Activated CD8-positive, alpha-beta T cell treated with anti-CD3 and anti-CD28 coated beads for 36 hours (primary cell): ENCODE measurements at regions of chr1 and their contacts with region 1.

Region 1: DNA sequence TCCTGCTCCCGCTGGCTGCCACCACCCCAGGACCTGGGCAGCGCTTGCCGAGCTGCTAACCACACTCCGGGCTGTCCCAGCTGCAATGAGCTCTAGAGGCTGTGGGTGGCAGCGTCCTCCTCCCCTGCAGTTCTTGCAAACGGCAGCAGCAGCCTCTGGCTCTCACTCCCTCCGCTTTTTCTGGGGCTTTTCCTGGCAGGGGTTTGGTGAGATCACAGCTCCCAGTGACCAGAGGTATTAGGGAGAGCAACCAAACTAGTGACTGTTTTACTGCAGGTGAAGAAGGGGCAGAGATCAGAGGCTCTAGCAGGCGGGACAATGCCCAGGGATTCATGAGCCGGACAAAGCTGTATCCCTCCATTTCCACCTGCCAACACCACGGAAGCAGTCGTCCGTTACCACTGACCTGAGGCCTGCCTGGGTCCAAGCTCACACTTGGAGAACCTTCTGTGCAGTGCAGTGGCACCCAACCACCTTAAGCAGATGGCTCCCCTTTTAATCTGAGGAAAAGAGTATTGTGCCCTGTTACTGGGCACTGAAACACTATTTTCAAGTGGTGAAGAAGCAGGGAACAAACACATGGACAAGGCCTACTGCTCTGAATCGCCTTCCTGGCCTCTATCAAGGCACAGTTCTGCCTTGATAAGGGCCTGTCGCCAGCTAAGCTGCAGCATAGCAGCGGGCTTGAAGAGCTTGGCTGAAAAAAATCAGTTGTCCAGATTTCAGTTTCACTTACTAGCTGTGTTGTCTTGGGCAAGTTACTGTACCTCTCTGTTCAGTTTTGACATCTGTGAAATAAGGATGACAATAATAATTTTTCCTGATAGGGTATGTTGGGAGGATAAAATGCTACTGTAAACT is at the start of gene F5:
- DNase-seq: peak; percentile 90
- ATAC-seq: peak; percentile 90
- H3K4me3 Mint-ChIP-seq: peak within 1 kb of the TSS; percentile 91
- H3K27ac Mint-ChIP-seq: peak within 1 kb of the TSS; percentile 91
- H3K4me1 Mint-ChIP-seq: peaks cover 71% of the 10 kb centered on the region
- H3K27me3 Mint-ChIP-seq: no peaks in the 10 kb centered on the region
- CTCF ChIP-seq: peak; percentile 66
- total RNA-seq, gene F5: 20.7 to 23.3 TPM

Region 2: GRCh38 chr1:169546087-169546995 is 40.3 kb before region 1 on chr1:
- CTCF ChIA-PET with region 1: interaction called, 11 read pairs
- POLR2A ChIA-PET with region 1: no interaction called
- intact Hi-C with region 1: no loop called
- DNase-seq: peak; percentile 57
- ATAC-seq: peak; percentile 66
- H3K4me3 Mint-ChIP-seq: no peak overlapping the region
- H3K27ac Mint-ChIP-seq: no peak overlapping the region
- H3K4me1 Mint-ChIP-seq: peaks cover 2% of the 10 kb centered on the region
- H3K27me3 Mint-ChIP-seq: no peaks in the 10 kb centered on the region
- CTCF ChIP-seq: peak; percentile 63

Region 3: GRCh38 chr1:169694304-169695075 is 107.9 kb after region 1 on chr1:
- CTCF ChIA-PET with region 1: interaction called, 17 read pairs
- POLR2A ChIA-PET with region 1: interaction called, 8 read pairs
- intact Hi-C with region 1: loop called (anchors 5 kb)
- DNase-seq: peak; percentile 58
- ATAC-seq: peak; percentile 39
- H3K4me3 Mint-ChIP-seq: peak overlapping the region; percentile 2
- H3K27ac Mint-ChIP-seq: peak overlapping the region; percentile 88
- H3K4me1 Mint-ChIP-seq: peaks cover 91% of the 10 kb centered on the region
- H3K27me3 Mint-ChIP-seq: no peaks in the 10 kb centered on the region
- CTCF ChIP-seq: peak; percentile 55

Region 4: DNA sequence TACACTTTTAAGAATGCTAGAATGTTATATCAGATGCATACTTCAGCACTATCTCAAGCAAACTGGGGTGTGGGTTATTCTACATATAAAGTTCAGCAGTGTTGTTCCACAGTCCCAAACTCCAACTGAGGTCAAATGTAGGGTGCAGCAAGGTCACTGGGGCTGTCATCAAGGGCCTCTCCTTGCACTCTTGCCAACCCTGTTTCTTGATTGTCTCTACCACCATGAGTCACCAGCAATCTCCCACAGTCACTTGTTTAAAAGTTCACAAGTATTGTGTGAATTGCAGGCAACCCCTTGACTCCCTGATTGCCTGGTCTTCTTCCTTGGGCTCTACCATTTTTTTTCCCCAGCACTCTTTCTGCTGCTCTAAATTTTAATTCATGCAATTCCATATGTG is 197.5 kb after region 1 on chr1:
- CTCF ChIA-PET with region 1: no interaction called
- POLR2A ChIA-PET with region 1: no interaction called
- intact Hi-C with region 1: no loop called
- DNase-seq: no peak
- ATAC-seq: peak; percentile 45
- H3K4me3 Mint-ChIP-seq: no peak overlapping the region
- H3K27ac Mint-ChIP-seq: no peak overlapping the region
- H3K4me1 Mint-ChIP-seq: no peaks in the 10 kb centered on the region
- H3K27me3 Mint-ChIP-seq: peaks cover 26% of the 10 kb centered on the region
- CTCF ChIP-seq: no peak

Region 5: DNA sequence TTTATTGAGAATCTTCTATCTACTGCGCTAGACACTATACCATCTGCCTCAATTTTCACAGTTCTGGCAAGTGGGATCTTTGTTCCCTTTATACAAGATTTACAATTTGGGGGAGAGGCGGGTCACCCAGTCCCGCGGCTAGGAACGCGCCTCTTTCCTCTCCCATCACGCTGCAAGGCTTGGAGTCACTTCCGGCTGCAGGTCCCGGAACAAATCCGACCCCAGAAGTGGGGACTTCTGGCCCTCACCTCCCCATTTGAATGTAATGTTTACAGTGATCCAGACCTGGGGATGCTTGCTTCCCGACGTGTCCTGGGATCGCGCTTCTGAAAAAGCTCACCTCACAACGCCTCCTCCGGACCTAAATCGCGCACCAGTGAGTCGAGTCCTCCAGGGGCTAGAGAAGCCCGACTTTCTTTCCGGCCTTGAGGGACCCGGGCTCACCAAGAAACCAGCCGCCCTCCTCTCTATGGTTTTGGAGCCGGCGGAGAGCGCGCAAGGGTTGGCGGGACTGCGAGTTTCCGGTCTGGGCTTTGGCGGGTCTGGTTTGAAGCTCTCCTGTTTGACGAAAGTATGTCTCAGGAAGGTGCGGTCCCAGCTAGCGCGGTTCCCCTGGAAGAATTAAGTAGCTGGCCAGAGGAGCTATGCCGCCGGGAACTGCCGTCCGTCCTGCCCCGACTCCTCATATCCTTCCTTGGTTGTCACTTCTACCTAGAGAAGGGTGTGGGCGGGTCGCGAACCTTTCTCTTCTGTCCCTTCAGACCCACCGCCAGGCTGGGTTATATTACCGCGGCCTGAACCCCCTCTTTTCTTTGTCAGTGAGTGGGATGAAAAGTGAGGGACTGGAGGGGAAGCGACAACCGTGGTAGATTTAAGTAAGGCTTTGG is 208.1 kb after region 1 on chr1 and contains the start of gene METTL18:
- CTCF ChIA-PET with region 1: interaction called, 10 read pairs
- POLR2A ChIA-PET with region 1: no interaction called
- intact Hi-C with region 1: no loop called
- DNase-seq: peak; percentile 96
- ATAC-seq: peak; percentile 98
- H3K4me3 Mint-ChIP-seq: peak within 1 kb of the TSS; percentile 89
- H3K27ac Mint-ChIP-seq: peak within 1 kb of the TSS; percentile 98
- H3K4me1 Mint-ChIP-seq: peaks cover 45% of the 10 kb centered on the region
- H3K27me3 Mint-ChIP-seq: no peaks in the 10 kb centered on the region
- CTCF ChIP-seq: peak; percentile 49
- total RNA-seq, gene METTL18: 8.7 to 10.8 TPM